Panc1 (cell line): ENCODE measurements at regions of chr10 and their contacts with region 1.

Region 1: DNA sequence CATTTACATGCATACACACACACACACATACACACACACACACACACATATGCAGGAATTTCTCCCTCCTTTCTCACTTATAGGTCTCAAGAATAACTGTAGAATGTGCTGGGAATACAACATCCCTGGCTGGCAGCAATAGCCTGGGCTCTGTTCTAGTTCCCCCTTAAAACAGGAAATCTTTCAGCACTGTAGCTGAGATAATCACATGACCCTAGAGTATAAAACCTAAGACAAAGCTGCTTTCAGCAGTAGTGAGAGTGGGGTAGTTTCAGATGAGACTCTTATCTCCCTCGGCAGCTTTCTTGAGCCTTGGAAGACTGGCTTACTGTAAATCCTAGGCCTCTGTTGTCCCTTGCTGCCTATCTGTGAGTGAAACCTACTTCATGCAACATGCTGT is 137.4 kb upstream of the AKR1E2 start:
- DNase-seq: no peak
- ATAC-seq: no peak
- H3K4me3 ChIP-seq: no peak overlapping the region
- H3K27ac ChIP-seq: peak overlapping the region; percentile 89
- H3K4me1 ChIP-seq: peaks cover 15% of the 10 kb centered on the region
- H3K27me3 ChIP-seq: no peaks in the 10 kb centered on the region
- CTCF ChIP-seq: no peak

Region 2: GRCh38 chr10:4639960-4640359 is 48.6 kb before region 1 on chr10:
- CTCF ChIA-PET with region 1: no interaction called
- POLR2A ChIA-PET with region 1: no interaction called
- in situ Hi-C with region 1: no loop called
- intact Hi-C with region 1: no loop called
- DNase-seq: no peak
- ATAC-seq: no peak
- H3K4me3 ChIP-seq: no peak overlapping the region
- H3K27ac ChIP-seq: no peak overlapping the region
- H3K4me1 ChIP-seq: no peaks in the 10 kb centered on the region
- H3K27me3 ChIP-seq: no peaks in the 10 kb centered on the region
- CTCF ChIP-seq: no peak

Region 3: GRCh38 chr10:4699950-4700730 is 11.5 kb after region 1 on chr10:
- CTCF ChIA-PET with region 1: no interaction called
- POLR2A ChIA-PET with region 1: interaction called, 11 read pairs
- in situ Hi-C with region 1: no loop called
- intact Hi-C with region 1: no loop called
- DNase-seq: no peak
- ATAC-seq: no peak
- H3K4me3 ChIP-seq: no peak overlapping the region
- H3K27ac ChIP-seq: peak overlapping the region; percentile 83
- H3K4me1 ChIP-seq: peaks cover 9% of the 10 kb centered on the region; the same call in 1 of the 2 replicates
- H3K27me3 ChIP-seq: no peaks in the 10 kb centered on the region
- CTCF ChIP-seq: no peak